ENCODE measurements at regions of chr16 and their contacts with region 1.

Region 1: DNA sequence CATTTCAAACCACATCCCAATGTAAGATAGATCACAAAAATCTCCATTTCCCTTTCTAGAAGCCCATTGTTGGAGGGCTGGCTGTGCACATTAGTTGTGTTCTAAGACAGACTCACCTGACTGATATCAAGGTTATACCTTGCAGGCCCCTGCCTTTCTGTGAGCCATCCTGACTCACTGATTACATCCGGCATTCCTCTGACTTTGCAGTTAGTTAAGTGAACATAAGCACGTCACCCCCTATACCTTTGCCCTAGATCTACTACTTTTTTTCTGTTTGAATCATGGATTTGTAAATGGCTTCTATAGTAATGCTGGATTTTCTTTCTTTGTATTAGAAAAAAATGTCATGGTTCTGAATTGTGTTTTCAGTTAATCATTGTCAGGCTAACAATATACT is 78.3 kb downstream of the TANGO6 start:
- DNase-seq: peak; percentile 98
- ATAC-seq: peak; percentile 86
- H3K4me3 ChIP-seq: peak overlapping the region in 1 of 2 experiments; percentile 37; a peak in 1 of 4 replicates
- H3K27ac ChIP-seq: peak overlapping the region; percentile 89
- H3K4me1 ChIP-seq: peaks cover 42 to 61% of the 10 kb centered on the region in 2 experiments
- H3K27me3 ChIP-seq: no peaks in the 10 kb centered on the region
- CTCF ChIP-seq: no peak
- POLR2A ChIP-seq: no peak
- RAD21 ChIP-seq: peak; percentile 38

Region 2: DNA sequence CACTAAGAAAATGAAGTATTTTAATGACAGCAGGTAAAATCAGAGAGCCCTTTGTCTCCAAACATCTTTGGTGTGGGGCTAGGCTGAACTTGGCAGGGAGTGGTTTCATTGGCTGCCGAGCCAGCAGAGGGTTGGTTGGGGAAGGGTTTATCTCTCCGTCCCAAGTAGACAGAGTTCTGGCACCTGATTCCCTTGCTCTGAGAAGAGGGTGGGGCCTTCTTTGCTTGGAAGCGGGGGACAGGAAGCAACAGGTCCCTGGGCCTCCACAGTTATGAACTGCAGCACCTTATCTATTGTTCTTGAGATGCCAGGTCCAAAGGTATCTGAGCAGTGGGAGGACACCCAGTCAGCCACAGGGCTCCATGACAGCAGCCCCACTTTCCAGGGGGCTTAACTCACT is 196.9 kb before region 1 on chr16:
- CTCF ChIA-PET with region 1: no interaction called
- POLR2A ChIA-PET with region 1: no interaction called
- RAD21 ChIA-PET with region 1: no interaction called
- intact Hi-C with region 1: no loop called
- DNase-seq: no peak
- ATAC-seq: no peak
- H3K4me3 ChIP-seq: no peak overlapping the region
- H3K27ac ChIP-seq: no peak overlapping the region
- H3K4me1 ChIP-seq: peaks cover 7 to 8% of the 10 kb centered on the region in 2 experiments; a peak in 2 of 4 replicates
- H3K27me3 ChIP-seq: no peaks in the 10 kb centered on the region
- CTCF ChIP-seq: no peak
- POLR2A ChIP-seq: no peak
- RAD21 ChIP-seq: no peak

Region 3: DNA sequence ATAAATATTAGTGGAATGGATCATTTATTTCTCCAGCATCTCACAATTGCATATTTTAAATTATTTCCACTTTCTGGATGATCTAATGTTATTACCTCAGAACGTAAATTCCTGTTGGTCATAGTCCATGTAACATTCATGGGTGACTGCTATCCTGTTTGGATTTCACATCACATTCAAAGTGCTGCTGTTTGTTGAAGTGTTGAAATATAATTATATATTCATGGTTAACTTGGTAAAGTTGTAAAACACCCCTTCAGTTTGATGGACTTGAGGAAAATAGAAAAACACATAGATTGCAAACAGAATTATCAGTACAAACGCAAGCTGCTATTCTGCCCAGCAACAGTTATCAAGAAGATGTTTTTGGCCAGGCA is 18.7 kb before region 1 on chr16:
- CTCF ChIA-PET with region 1: no interaction called
- POLR2A ChIA-PET with region 1: no interaction called
- RAD21 ChIA-PET with region 1: no interaction called
- intact Hi-C with region 1: no loop called
- DNase-seq: no peak
- ATAC-seq: no peak
- H3K4me3 ChIP-seq: no peak overlapping the region
- H3K27ac ChIP-seq: no peak overlapping the region
- H3K4me1 ChIP-seq: peaks cover 4 to 13% of the 10 kb centered on the region in 2 experiments
- H3K27me3 ChIP-seq: no peaks in the 10 kb centered on the region
- CTCF ChIP-seq: no peak
- POLR2A ChIP-seq: no peak
- RAD21 ChIP-seq: no peak

Region 4: GRCh38 chr16:68985855-68986254 is 64.2 kb after region 1 on chr16:
- CTCF ChIA-PET with region 1: no interaction called
- POLR2A ChIA-PET with region 1: interaction called, 3 read pairs
- RAD21 ChIA-PET with region 1: interaction called in 1 of 2 experiments, 3 read pairs
- intact Hi-C with region 1: loop called (anchors 5 kb)
- DNase-seq: peak; percentile 51
- ATAC-seq: peak; percentile 72
- H3K4me3 ChIP-seq: no peak overlapping the region
- H3K27ac ChIP-seq: peak overlapping the region; percentile 49; the same call in 1 of the 2 replicates
- H3K4me1 ChIP-seq: peaks cover 30 to 57% of the 10 kb centered on the region in 2 experiments
- H3K27me3 ChIP-seq: no peaks in the 10 kb centered on the region
- CTCF ChIP-seq: no peak
- POLR2A ChIP-seq: no peak
- RAD21 ChIP-seq: no peak

Region 5: GRCh38 chr16:69089091-69089910 is 167.6 kb after region 1 on chr16:
- CTCF ChIA-PET with region 1: no interaction called
- POLR2A ChIA-PET with region 1: no interaction called
- RAD21 ChIA-PET with region 1: no interaction called
- intact Hi-C with region 1: no loop called
- DNase-seq: no peak
- ATAC-seq: peak; percentile 70
- H3K4me3 ChIP-seq: no peak overlapping the region
- H3K27ac ChIP-seq: peak overlapping the region; percentile 9; the same call in 1 of the 2 replicates
- H3K4me1 ChIP-seq: peaks cover 21 to 35% of the 10 kb centered on the region in 2 experiments
- H3K27me3 ChIP-seq: no peaks in the 10 kb centered on the region
- CTCF ChIP-seq: no peak
- POLR2A ChIP-seq: no peak
- RAD21 ChIP-seq: no peak

Measured in HCT116 (cell line).